Right ventricle myocardium superior (tissue), 1 donor: ENCODE measurements at regions of chr4 and their contacts with region 1.

Region 1: DNA sequence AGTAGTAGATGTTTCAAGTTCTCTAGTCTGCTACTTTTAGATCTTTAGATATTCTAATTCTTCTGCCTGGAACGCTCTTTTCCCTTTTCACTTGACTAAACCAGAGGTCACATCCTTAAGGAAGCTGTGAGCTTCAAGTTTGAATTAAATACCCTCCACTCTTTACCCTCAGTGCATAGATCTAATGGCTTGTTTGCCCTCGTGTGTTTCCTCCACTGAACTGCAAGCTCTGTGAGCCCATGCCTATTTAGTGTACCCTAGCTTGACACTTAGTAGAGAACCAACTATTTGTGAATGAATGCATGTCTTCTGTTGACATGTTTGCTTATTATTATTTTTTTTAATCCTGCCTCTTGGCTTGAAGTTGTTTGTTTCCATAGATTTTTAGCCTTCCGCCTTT is 138.3 kb downstream of the PDE5A start:
- DNase-seq: no peak
- ATAC-seq: no peak

Region 2: GRCh38 chr4:119314356-119314755 is 176.0 kb before region 1 on chr4:
- intact Hi-C with region 1: loop called (anchors 10 kb)
- DNase-seq: no peak
- ATAC-seq: peak; percentile 88